CD8-positive, alpha-beta T cell (primary cell): ENCODE measurements at regions of chr4 and their contacts with region 1.

Region 1: DNA sequence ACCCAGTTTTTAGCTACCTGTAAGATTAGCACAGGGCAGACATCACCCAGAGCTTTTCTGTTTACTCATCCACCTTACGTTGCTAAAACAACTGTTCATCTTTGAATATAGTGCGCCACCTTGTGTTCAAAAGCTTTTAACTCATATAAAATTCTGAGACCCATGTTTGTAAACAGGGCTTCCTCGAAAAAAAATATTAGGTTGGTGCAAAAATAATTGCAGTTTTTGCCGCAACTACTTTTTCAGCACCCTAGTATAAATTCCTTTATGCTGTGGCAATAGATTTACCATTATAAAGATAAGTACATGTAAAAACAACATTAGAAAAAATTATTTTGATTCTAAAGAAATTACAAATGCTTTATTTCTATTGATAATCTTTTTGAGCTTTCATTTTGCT is 147.9 kb downstream of the LRBA start:
- DNase-seq: peak in 5 of 9 experiments; percentile 7 to 85 (median 54)
- ATAC-seq: peak; percentile 84
- H3K4me3 ChIP-seq: no peak overlapping the region
- H3K4me3 Mint-ChIP-seq: no peak overlapping the region
- H3K27ac ChIP-seq: no peak overlapping the region
- H3K27ac Mint-ChIP-seq: no peak overlapping the region
- H3K4me1 ChIP-seq: no peaks in the 10 kb centered on the region
- H3K4me1 Mint-ChIP-seq: peaks cover 2% of the 10 kb centered on the region
- H3K27me3 ChIP-seq: no peaks in the 10 kb centered on the region
- H3K27me3 Mint-ChIP-seq: no peaks in the 10 kb centered on the region
- CTCF ChIP-seq: peak; percentile 73

Region 2: DNA sequence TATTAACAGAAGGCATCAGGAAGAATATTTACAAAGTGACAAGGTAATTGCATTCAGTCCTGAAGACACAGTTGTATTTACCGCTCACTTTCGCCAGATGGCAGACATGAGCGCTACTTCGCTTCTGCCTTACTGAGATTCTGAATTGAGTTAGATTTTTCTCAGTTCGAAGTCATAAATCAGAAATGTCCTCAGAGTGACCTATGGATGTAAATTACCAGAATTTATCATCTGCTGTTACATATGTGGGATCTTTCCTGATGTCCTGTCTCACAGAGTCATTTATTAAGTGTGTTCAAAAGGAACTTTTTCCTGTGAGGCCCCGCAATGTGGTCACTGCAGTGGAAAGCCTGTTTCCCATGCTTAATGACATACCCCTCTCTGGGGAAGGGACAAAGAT is 886.2 kb before region 1 on chr4:
- CTCF ChIA-PET with region 1: interaction called, 7 read pairs
- POLR2A ChIA-PET with region 1: no interaction called
- intact Hi-C with region 1: loop called (anchors 1 kb)
- DNase-seq: peak in 6 of 9 experiments; percentile 11 to 58 (median 41)
- ATAC-seq: peak; percentile 31
- H3K4me3 ChIP-seq: no peak overlapping the region
- H3K4me3 Mint-ChIP-seq: no peak overlapping the region
- H3K27ac ChIP-seq: no peak overlapping the region
- H3K27ac Mint-ChIP-seq: no peak overlapping the region
- H3K4me1 ChIP-seq: no peaks in the 10 kb centered on the region
- H3K4me1 Mint-ChIP-seq: no peaks in the 10 kb centered on the region
- H3K27me3 ChIP-seq: no peaks in the 10 kb centered on the region
- H3K27me3 Mint-ChIP-seq: no peaks in the 10 kb centered on the region
- CTCF ChIP-seq: peak; percentile 73

Region 3: GRCh38 chr4:150297861-150298474 is 569.2 kb before region 1 on chr4:
- CTCF ChIA-PET with region 1: interaction called, 7 read pairs
- POLR2A ChIA-PET with region 1: no interaction called
- intact Hi-C with region 1: loop called (anchors 1 to 2 kb)
- DNase-seq: peak in 5 of 9 experiments; percentile 17 to 41 (median 23)
- ATAC-seq: no peak
- H3K4me3 ChIP-seq: no peak overlapping the region
- H3K4me3 Mint-ChIP-seq: no peak overlapping the region
- H3K27ac ChIP-seq: no peak overlapping the region
- H3K27ac Mint-ChIP-seq: no peak overlapping the region
- H3K4me1 ChIP-seq: no peaks in the 10 kb centered on the region
- H3K4me1 Mint-ChIP-seq: peaks cover 1% of the 10 kb centered on the region
- H3K27me3 ChIP-seq: no peaks in the 10 kb centered on the region
- H3K27me3 Mint-ChIP-seq: no peaks in the 10 kb centered on the region
- CTCF ChIP-seq: peak; percentile 46

Region 4: DNA sequence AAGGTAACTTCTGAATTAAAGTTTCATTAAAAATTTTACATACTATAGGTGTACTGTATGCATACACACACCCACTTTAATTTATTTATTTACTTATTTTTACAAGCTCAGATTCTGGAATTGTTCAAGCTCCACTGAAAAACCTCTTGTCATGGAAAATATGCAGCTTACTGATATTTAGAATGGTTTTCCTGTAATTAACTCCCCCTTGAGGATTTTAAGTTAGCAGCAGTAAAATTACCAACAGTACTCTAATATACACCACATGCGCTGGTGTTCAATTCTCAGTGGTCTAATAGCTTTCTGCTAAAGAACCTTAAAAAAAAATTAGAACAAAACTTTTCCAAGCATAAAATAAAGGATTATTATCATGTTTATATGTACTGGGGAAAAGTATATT is 273.2 kb before region 1 on chr4:
- CTCF ChIA-PET with region 1: no interaction called
- POLR2A ChIA-PET with region 1: no interaction called
- intact Hi-C with region 1: no loop called
- DNase-seq: no peak
- ATAC-seq: no peak
- H3K4me3 ChIP-seq: no peak overlapping the region
- H3K4me3 Mint-ChIP-seq: no peak overlapping the region
- H3K27ac ChIP-seq: no peak overlapping the region
- H3K27ac Mint-ChIP-seq: no peak overlapping the region
- H3K4me1 ChIP-seq: no peaks in the 10 kb centered on the region
- H3K4me1 Mint-ChIP-seq: no peaks in the 10 kb centered on the region
- H3K27me3 ChIP-seq: no peaks in the 10 kb centered on the region
- H3K27me3 Mint-ChIP-seq: no peaks in the 10 kb centered on the region
- CTCF ChIP-seq: no peak

Region 5: DNA sequence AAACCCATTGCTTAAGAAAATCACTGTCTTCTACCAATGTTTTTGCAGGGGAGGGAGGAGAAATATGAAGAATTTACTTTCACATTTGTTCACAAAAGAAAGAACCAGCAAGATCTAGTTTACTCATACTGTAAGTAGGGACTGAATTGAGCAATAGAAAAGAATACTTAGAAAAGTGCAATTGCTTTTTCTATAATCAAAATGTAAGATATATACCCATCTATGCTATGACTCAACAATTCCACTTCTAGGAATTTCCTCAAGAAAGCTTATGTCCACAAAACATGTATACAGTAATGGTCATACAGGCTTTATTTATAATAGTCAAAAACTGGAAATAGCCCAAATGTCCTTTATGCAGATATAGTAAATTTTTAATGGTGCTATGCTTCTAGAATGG is 48.5 kb before region 1 on chr4:
- CTCF ChIA-PET with region 1: interaction called, 6 read pairs
- POLR2A ChIA-PET with region 1: no interaction called
- intact Hi-C with region 1: loop called in 1 of 2 experiments (anchors 5 kb)
- DNase-seq: no peak
- ATAC-seq: no peak
- H3K4me3 ChIP-seq: no peak overlapping the region
- H3K4me3 Mint-ChIP-seq: no peak overlapping the region
- H3K27ac ChIP-seq: no peak overlapping the region
- H3K27ac Mint-ChIP-seq: no peak overlapping the region
- H3K4me1 ChIP-seq: no peaks in the 10 kb centered on the region
- H3K4me1 Mint-ChIP-seq: peaks cover 9% of the 10 kb centered on the region
- H3K27me3 ChIP-seq: no peaks in the 10 kb centered on the region
- H3K27me3 Mint-ChIP-seq: no peaks in the 10 kb centered on the region
- CTCF ChIP-seq: no peak

Region 6: GRCh38 chr4:152021788-152022438 is 1154.8 kb after region 1 on chr4:
- CTCF ChIA-PET with region 1: no interaction called
- POLR2A ChIA-PET with region 1: no interaction called
- intact Hi-C with region 1: no loop called
- DNase-seq: no peak
- ATAC-seq: no peak
- H3K4me3 ChIP-seq: no peak overlapping the region
- H3K4me3 Mint-ChIP-seq: no peak overlapping the region
- H3K27ac ChIP-seq: no peak overlapping the region
- H3K27ac Mint-ChIP-seq: no peak overlapping the region
- H3K4me1 ChIP-seq: peaks cover 10% of the 10 kb centered on the region
- H3K4me1 Mint-ChIP-seq: no peaks in the 10 kb centered on the region
- H3K27me3 ChIP-seq: no peaks in the 10 kb centered on the region
- H3K27me3 Mint-ChIP-seq: no peaks in the 10 kb centered on the region
- CTCF ChIP-seq: no peak